Calu3 (cell line): ENCODE measurements at regions of chr15 and their contacts with region 1.

Region 1: GRCh38 chr15:67065444-67066093 is at the start of gene SMAD3:
- DNase-seq: peak; percentile 94
- H3K4me3 Mint-ChIP-seq: peak within 1 kb of the TSS; percentile 85
- H3K27ac Mint-ChIP-seq: peak within 1 kb of the TSS; percentile 80
- H3K4me1 Mint-ChIP-seq: peaks cover 54% of the 10 kb centered on the region
- H3K27me3 Mint-ChIP-seq: no peaks in the 10 kb centered on the region
- CTCF ChIP-seq: no peak
- total RNA-seq, gene SMAD3: 121 and 147 TPM in 2 replicates

Region 2: GRCh38 chr15:66966257-66966656 is 99.3 kb before region 1 on chr15:
- CTCF ChIA-PET with region 1: no interaction called
- intact Hi-C with region 1: no loop called
- DNase-seq: no peak
- H3K4me3 Mint-ChIP-seq: no peak overlapping the region
- H3K27ac Mint-ChIP-seq: no peak overlapping the region
- H3K4me1 Mint-ChIP-seq: no peaks in the 10 kb centered on the region
- H3K27me3 Mint-ChIP-seq: no peaks in the 10 kb centered on the region
- CTCF ChIP-seq: no peak

Region 3: DNA sequence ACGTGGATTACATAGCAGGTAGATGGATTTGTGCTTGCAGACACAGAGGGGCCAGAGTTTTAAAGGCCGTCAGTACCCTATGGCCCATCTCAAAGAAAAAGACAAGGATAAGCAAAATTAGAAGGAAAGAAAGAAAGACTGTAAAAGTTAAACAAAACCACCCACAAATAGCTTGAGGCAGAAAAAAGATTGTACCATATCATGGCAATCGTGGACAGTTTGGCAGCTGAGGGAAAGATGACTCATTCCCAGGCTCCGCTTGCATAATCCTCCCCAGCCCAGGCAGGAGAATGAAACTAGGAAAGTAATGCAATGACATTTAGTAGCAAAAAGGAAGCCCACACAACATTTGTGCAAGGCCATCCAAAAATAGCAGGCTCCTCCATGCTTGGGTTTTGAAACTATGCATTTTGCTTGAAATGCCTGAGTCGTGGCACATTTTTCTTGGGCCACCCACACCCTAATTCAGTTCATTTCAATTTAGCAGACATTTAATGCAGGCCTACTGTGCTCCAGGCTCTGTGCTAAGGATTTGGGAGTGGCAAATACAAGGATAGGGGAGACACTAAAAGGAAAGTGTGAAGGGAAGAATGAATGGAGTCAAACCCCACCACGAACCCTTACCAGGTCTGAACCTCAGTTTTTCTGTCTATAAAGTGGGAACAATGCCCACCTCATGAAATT is 41.1 kb before region 1 on chr15:
- CTCF ChIA-PET with region 1: interaction called, 3 read pairs
- intact Hi-C with region 1: loop called (anchors 5 kb)
- DNase-seq: peak; percentile 79
- H3K4me3 Mint-ChIP-seq: peak overlapping the region; percentile 7
- H3K27ac Mint-ChIP-seq: peak overlapping the region; percentile 38
- H3K4me1 Mint-ChIP-seq: peaks cover 38% of the 10 kb centered on the region
- H3K27me3 Mint-ChIP-seq: no peaks in the 10 kb centered on the region
- CTCF ChIP-seq: no peak

Region 4: GRCh38 chr15:67048281-67049279 is 17.0 kb before region 1 on chr15:
- CTCF ChIA-PET with region 1: interaction called, 5 read pairs
- intact Hi-C with region 1: loop called (anchors 1 kb)
- DNase-seq: peak; percentile 85
- H3K4me3 Mint-ChIP-seq: peak overlapping the region; percentile 65
- H3K27ac Mint-ChIP-seq: peak overlapping the region; percentile 86
- H3K4me1 Mint-ChIP-seq: peaks cover 53% of the 10 kb centered on the region
- H3K27me3 Mint-ChIP-seq: no peaks in the 10 kb centered on the region
- CTCF ChIP-seq: no peak

Region 5: GRCh38 chr15:67109141-67110034 is 43.8 kb after region 1 on chr15:
- CTCF ChIA-PET with region 1: interaction called, 4 read pairs
- intact Hi-C with region 1: loop called (anchors 5 kb)
- DNase-seq: no peak
- H3K4me3 Mint-ChIP-seq: no peak overlapping the region
- H3K27ac Mint-ChIP-seq: peak overlapping the region; percentile 93
- H3K4me1 Mint-ChIP-seq: no peaks in the 10 kb centered on the region
- H3K27me3 Mint-ChIP-seq: no peaks in the 10 kb centered on the region
- CTCF ChIP-seq: no peak

Region 6: DNA sequence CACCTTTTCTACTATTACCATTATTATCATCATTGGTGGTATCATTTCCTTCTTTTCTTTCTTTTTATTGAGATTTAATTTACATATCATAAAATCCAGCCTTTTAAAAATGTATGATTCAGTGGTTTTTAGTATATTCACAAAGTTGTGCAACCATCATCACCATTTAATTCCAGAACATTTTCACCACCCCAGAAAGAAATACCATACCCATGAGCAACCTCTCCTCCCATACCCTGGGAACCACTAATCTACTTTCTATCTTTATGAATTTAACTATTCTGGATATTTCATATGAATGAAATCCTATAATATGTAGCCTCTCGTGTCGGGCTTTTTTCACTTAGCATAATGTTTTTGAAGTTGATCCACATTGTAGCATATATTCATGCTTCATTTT is 159.8 kb after region 1 on chr15:
- CTCF ChIA-PET with region 1: no interaction called
- intact Hi-C with region 1: no loop called
- DNase-seq: no peak
- H3K4me3 Mint-ChIP-seq: no peak overlapping the region
- H3K27ac Mint-ChIP-seq: no peak overlapping the region
- H3K4me1 Mint-ChIP-seq: no peaks in the 10 kb centered on the region
- H3K27me3 Mint-ChIP-seq: no peaks in the 10 kb centered on the region
- CTCF ChIP-seq: no peak

Region 7: DNA sequence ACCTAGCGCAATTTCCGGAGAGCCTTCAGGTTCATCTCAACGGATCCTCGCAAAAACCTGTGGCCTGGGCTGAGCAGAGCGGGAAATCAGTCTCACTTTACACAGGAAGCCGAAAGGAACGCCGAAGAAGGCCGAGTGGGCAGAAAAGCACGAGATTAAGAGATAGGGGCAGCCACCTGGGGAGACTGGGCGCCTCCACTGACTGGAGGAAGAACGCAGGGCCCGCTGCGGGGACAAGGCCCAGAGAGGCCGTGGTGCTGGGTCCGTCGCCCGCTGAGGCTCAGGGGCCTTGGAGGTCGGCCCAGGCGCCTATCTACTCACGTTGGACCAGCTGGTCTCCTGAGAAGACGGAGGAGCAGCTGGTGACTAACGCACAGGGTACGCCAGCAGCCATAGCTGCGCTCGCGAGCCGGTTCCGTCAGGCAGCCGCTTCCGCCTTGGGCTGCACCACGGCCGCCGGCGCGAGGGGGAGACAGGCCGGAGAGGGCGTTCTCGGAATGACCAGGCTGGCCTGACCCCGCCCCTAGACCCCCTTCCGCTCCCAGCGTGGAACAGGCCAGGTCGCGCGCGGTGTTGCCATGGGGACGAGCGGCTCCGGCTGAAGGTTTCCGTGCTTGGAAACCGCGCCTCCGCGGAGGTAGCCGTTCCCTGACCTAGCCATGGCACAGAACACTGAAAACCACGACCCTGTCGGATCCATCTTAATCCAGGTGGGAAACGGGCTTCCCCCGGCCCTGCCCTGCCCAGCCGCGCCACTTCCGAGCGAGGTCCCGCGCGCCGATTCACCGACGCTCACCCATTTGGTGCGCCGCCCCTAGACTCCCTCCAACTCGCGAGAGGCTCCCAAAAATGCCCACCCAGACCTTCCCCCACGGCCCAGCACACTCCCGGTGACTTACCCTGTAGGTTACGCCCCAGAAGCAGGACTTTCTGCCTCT is 188.9 kb after region 1 on chr15 and contains the starts of genes AAGAB and IQCH:
- CTCF ChIA-PET with region 1: no interaction called
- intact Hi-C with region 1: loop called (anchors 5 kb)
- DNase-seq: peak; percentile 100
- H3K4me3 Mint-ChIP-seq: peak within 1 kb of the TSS; percentile 96
- H3K27ac Mint-ChIP-seq: peak within 1 kb of the TSS; percentile 95
- H3K4me1 Mint-ChIP-seq: peaks cover 22% of the 10 kb centered on the region
- H3K27me3 Mint-ChIP-seq: no peaks in the 10 kb centered on the region
- CTCF ChIP-seq: no peak
- total RNA-seq, gene AAGAB: 68.1 and 73.6 TPM in 2 replicates
- total RNA-seq, gene IQCH: 5.5 and 8.1 TPM in 2 replicates